ENCODE measurements at regions of chr10 and their contacts with region 1.

Region 1: DNA sequence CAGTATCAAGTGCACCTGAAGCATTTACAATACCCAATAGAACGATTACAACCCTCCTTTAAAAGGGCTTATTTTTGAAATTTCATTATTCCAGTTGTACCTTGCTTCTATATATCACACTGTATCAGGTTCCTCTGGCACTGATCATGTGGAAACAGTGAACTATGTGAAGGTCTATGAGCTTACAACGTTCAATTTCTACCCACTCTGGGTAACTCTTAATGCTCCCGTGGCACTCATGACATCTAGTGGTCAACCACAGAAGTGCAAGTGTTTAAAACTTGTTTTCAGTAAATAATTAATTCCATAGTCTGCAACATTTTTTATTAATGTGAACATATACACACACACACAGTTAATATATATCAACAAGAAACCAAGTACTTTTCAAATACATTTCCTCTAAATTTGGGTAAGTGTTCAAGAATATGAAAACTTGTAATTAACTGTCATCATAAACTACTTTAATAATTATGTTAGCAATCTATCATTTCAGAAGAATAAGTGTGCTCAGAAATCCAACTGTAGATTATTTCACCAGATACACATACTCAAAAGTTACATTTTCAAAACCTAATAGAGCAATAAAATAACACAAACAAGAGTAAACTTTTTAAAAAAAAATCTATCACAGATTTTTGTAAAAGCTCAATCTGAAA is 61.0 kb downstream of the MPP7 start:
- DNase-seq: peak in 4 of 5 donors; percentile 36 to 49 (median 42)
- H3K4me3 ChIP-seq: no peak overlapping the region
- H3K4me3 Mint-ChIP-seq: no peak overlapping the region
- H3K27ac ChIP-seq: no peak overlapping the region
- H3K27ac Mint-ChIP-seq: no peak overlapping the region
- H3K4me1 ChIP-seq: peaks cover 14% of the 10 kb centered on the region
- H3K4me1 Mint-ChIP-seq: peaks cover 13 to 20% (median 17%) of the 10 kb centered on the region in 4 donors
- H3K27me3 ChIP-seq: no peaks in the 10 kb centered on the region
- H3K27me3 Mint-ChIP-seq: no peaks in the 10 kb centered on the region

Region 2: DNA sequence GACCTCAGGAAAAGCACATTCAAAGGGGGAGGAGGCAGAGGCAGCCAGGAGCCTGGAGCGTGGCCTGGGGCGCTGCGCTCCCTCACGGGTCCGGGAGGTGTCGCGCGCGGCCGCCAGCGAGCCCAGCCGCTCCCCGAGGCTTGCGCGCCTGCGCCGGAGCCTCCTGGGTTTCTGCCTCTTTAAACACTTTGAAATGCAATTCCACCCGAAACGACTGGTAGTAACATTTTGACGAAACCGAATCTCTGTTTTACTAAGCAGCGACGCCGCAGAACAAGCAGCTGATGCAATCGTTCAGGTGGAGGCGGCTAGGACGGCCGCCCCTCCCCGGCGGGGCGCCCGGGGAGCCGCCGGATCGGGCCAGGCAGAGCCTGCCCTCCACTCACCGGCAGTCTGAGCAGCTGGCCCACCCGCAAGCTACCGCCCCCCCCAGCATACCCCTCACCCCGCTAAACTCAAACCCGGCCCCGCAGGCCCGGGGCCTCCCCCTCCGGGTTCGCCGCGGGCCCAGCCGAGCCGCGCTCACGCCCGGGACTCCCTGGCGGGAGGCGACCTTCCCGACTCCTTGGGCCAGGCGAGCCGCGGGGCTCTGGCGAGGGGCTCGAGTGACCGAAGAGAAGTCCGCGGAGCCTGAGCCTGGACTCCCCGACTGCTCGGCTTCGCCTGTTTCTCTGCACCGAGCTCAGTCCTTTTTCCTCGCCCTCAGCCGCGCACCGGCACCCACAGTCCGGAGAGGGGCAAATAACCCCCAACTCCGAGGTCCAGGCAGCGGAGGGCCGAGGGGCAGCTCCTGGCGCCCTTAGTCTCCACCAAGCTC is 499.5 kb before region 1 on chr10:
- CTCF ChIA-PET with region 1: interaction called, 13 read pairs
- POLR2A ChIA-PET with region 1: no interaction called
- intact Hi-C with region 1: loop called (anchors 1 kb)
- DNase-seq: peak; percentile 77 to 82 (median 80)
- H3K4me3 ChIP-seq: peak overlapping the region; percentile 22 to 68
- H3K4me3 Mint-ChIP-seq: peak overlapping the region; percentile 82 to 96 (median 89)
- H3K27ac ChIP-seq: no peak overlapping the region
- H3K27ac Mint-ChIP-seq: peak overlapping the region in 1 of 7 donors; percentile 57
- H3K4me1 ChIP-seq: peaks cover 56% of the 10 kb centered on the region
- H3K4me1 Mint-ChIP-seq: peaks cover 23 to 47% (median 35%) of the 10 kb centered on the region in 4 donors
- H3K27me3 ChIP-seq: peaks cover 52% of the 10 kb centered on the region
- H3K27me3 Mint-ChIP-seq: peaks cover 45 to 48% of the 10 kb centered on the region in 2 donors

Region 3: GRCh38 chr10:27783660-27784059 is 458.2 kb before region 1 on chr10:
- CTCF ChIA-PET with region 1: no interaction called
- POLR2A ChIA-PET with region 1: no interaction called
- intact Hi-C with region 1: loop called (anchors 2 kb)
- DNase-seq: peak; percentile 11 to 42 (median 26)
- H3K4me3 ChIP-seq: no peak overlapping the region
- H3K4me3 Mint-ChIP-seq: no peak overlapping the region
- H3K27ac ChIP-seq: no peak overlapping the region
- H3K27ac Mint-ChIP-seq: no peak overlapping the region
- H3K4me1 ChIP-seq: no peaks in the 10 kb centered on the region
- H3K4me1 Mint-ChIP-seq: no peaks in the 10 kb centered on the region
- H3K27me3 ChIP-seq: no peaks in the 10 kb centered on the region
- H3K27me3 Mint-ChIP-seq: peaks cover 9 to 14% of the 10 kb centered on the region in 2 donors

Measured in CD4-positive, alpha-beta memory T cell (primary cell).